Common myeloid progenitor, CD34-positive (primary cell): ENCODE measurements at regions of chr13 and their contacts with region 1.

Region 1: DNA sequence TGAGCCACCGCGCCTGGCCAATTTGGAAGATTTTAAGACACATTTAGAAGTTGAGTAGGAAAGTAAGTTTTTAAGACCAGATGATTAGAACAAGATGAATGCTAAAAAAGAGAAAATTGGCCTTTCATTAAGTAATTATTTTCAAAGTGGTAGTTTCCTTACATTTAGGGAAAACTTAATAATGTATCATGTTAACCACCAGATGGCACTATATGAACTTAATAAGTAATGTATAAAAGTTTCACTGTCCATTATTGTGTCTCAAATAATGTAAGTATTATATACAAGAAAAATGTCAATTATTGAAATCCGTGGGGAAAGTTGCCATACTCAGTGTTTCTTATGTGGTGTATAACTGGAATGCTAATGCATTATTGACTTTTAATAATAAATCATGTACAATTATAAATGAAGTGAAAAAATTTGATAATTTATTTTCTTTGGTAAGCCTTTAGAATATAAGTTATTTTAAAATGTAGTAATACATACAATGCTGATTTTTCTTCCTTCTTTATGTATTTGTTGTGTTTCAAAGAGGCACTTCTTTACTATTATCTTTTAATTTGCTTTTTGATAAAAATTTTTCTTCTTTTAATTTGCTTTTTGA is 29.2 kb downstream of the COG6 start:
- DNase-seq: peak; percentile 38 to 69 (median 58)
- H3K4me3 ChIP-seq: no peak overlapping the region
- H3K27ac ChIP-seq: no peak overlapping the region
- H3K4me1 ChIP-seq: peaks cover 0 to 16% (median 2%) of the 10 kb centered on the region in 4 experiments
- H3K27me3 ChIP-seq: no peaks in the 10 kb centered on the region

Region 2: GRCh38 chr13:39233519-39233918 is 451.1 kb before region 1 on chr13:
- CTCF ChIA-PET with region 1: no interaction called
- POLR2A ChIA-PET with region 1: no interaction called
- DNase-seq: no peak
- H3K4me3 ChIP-seq: no peak overlapping the region
- H3K27ac ChIP-seq: no peak overlapping the region
- H3K4me1 ChIP-seq: no peaks in the 10 kb centered on the region
- H3K27me3 ChIP-seq: peaks cover 0 to 1% (median 0%) of the 10 kb centered on the region in 5 experiments

Region 3: DNA sequence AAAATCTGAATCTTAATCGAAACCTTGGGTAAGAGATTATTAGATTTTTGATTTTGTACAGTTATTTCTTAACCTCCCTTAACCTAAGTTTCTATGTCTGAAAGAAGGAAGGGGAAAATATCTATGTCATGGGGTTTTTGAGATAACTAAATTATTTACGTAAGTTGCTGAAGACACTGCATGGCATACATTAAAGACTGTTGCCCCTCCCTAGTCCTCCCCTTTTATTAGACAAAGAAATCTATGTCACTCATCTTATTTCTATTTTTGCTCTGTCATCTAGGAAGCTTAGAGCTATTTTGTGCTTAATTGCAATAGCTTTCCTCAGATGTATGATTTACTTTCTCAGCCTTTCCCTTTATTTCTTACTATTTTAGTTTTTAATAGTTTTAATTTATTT is 14.2 kb before region 1 on chr13:
- CTCF ChIA-PET with region 1: interaction called, 10 read pairs
- POLR2A ChIA-PET with region 1: interaction called, 3 read pairs
- DNase-seq: peak in 1 of 3 donors; percentile 52
- H3K4me3 ChIP-seq: no peak overlapping the region
- H3K27ac ChIP-seq: no peak overlapping the region
- H3K4me1 ChIP-seq: peaks cover 0 to 16% (median 0%) of the 10 kb centered on the region in 4 experiments
- H3K27me3 ChIP-seq: no peaks in the 10 kb centered on the region